B cell (primary cell): ENCODE measurements at regions of chr7 and their contacts with region 1.

Region 1: DNA sequence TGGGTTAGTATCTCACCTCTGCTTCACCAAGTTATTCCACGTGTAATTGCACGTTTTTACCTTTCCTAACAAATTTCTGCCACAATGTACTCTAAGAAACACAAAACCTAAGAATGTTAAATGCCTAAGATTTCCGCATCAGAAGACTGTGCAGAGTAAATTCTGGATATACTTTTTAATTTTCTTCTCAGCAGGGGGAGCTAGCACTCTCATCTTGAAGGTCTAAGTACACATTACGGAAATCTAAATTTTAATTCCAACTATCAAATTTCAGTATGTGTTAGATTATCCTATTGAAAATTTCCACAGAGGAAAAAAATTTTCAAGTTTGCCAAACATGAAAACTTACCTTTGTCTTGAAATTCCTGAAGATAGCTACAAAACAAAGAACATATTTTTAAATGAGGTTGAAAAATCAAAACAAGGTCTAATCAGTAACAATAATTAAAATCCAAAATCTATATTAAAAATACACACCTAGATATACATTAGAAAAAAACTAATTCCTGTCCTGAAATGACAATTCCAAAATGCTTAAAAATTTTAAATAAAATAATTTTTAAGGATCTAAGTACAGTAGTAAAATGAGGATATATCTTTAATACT is 10.5 kb downstream of the SKAP2 start:
- DNase-seq: peak; percentile 62
- ATAC-seq: no peak
- H3K4me3 ChIP-seq: no peak overlapping the region
- H3K4me3 Mint-ChIP-seq: no peak overlapping the region
- H3K27ac ChIP-seq: no peak overlapping the region
- H3K27ac Mint-ChIP-seq: no peak overlapping the region
- H3K4me1 ChIP-seq: peaks cover 21 to 23% of the 10 kb centered on the region in 2 donors
- H3K4me1 Mint-ChIP-seq: peaks cover 26% of the 10 kb centered on the region
- H3K27me3 ChIP-seq: no peaks in the 10 kb centered on the region
- H3K27me3 Mint-ChIP-seq: no peaks in the 10 kb centered on the region
- CTCF ChIP-seq: peak; percentile 74

Region 2: GRCh38 chr7:25862260-25863037 is 991.4 kb before region 1 on chr7:
- CTCF ChIA-PET with region 1: no interaction called
- POLR2A ChIA-PET with region 1: no interaction called
- intact Hi-C with region 1: loop called (anchors 10 kb)
- DNase-seq: peak; percentile 71
- ATAC-seq: peak; percentile 72
- H3K4me3 ChIP-seq: peak overlapping the region in 1 of 5 experiments; percentile 16
- H3K4me3 Mint-ChIP-seq: peak overlapping the region; percentile 47
- H3K27ac ChIP-seq: no peak overlapping the region
- H3K27ac Mint-ChIP-seq: peak overlapping the region; percentile 70
- H3K4me1 ChIP-seq: peaks cover 12 to 40% of the 10 kb centered on the region in 2 donors
- H3K4me1 Mint-ChIP-seq: peaks cover 3% of the 10 kb centered on the region
- H3K27me3 ChIP-seq: peaks cover 5 to 94% (median 79%) of the 10 kb centered on the region in 4 experiments
- H3K27me3 Mint-ChIP-seq: peaks cover 50% of the 10 kb centered on the region
- CTCF ChIP-seq: no peak

Region 3: DNA sequence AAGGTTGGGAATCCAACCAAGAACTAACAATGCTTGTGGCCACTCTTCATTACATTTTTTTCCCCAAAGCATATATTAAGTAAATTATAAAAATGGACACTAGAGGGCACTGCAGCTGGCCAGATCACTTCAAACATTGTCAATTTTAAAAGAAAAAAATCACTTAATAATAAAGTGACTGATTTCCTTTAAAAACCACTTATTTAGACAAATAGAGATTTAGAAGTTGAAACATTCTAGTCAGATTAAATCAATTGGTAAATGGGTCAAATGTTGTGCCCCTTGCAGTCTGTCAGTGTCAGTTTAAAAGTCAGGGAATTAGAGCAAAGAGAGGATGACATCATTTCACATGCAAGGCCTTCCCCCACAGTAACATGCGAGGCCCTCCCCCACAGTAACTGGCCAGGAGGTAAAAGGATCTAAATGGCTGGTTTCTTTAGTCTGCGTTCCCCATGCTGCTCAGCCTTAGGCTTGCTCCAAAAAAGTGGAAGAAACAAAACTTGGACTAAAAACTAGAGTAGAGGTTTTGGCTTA is 167.4 kb before region 1 on chr7:
- CTCF ChIA-PET with region 1: interaction called, 4 read pairs
- POLR2A ChIA-PET with region 1: no interaction called
- intact Hi-C with region 1: loop called (anchors 5 kb)
- DNase-seq: peak; percentile 60
- ATAC-seq: no peak
- H3K4me3 ChIP-seq: no peak overlapping the region
- H3K4me3 Mint-ChIP-seq: no peak overlapping the region
- H3K27ac ChIP-seq: no peak overlapping the region
- H3K27ac Mint-ChIP-seq: no peak overlapping the region
- H3K4me1 ChIP-seq: peaks cover 7 to 14% of the 10 kb centered on the region in 2 donors
- H3K4me1 Mint-ChIP-seq: peaks cover 28% of the 10 kb centered on the region
- H3K27me3 ChIP-seq: no peaks in the 10 kb centered on the region
- H3K27me3 Mint-ChIP-seq: no peaks in the 10 kb centered on the region
- CTCF ChIP-seq: peak; percentile 87

Region 4: DNA sequence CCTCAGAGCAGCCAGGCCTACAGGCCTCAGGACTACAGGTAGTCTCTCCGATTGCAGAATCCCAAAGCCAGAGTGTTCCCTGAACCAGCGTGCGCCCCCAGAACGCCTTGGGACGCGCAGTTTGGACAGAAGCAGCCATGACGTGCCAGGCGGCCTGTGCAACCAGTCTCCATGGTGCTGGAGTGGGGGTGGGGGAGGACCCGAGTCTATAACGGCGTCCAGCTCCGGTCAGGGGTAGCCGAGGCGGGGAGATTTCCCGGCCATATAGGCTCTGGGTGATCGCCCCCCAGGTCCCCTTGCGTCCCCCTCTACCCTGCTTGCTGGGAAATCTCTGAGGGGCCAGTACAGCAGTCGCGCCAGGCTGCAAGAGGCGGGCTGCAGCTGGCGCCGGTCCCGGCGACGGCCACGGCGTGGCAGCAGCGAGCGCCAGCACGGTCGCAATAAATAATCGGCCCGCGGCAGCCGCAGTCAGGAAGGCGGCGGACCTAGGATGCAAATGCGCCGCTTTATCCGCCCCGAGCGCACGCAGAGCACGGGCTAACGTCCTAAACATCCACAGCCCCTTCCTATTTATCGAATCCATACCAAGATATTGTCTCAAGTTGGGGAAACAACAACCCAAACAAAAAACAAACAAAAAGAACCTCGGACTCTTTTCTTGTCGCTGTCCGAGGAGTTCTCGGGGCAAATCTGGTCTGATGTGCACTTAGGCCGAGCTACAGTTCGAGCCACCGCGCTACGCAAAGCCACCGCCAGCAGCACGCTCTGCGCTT is 296.9 kb after region 1 on chr7:
- CTCF ChIA-PET with region 1: interaction called, 24 read pairs
- POLR2A ChIA-PET with region 1: no interaction called
- intact Hi-C with region 1: no loop called
- DNase-seq: peak; percentile 86
- ATAC-seq: peak; percentile 86
- H3K4me3 ChIP-seq: peak overlapping the region; percentile 26 to 48 (median 34)
- H3K4me3 Mint-ChIP-seq: peak overlapping the region; percentile 83
- H3K27ac ChIP-seq: no peak overlapping the region
- H3K27ac Mint-ChIP-seq: peak overlapping the region; percentile 73
- H3K4me1 ChIP-seq: peaks cover 62 to 71% of the 10 kb centered on the region in 2 donors
- H3K4me1 Mint-ChIP-seq: peaks cover 43% of the 10 kb centered on the region
- H3K27me3 ChIP-seq: peaks cover 0 to 99% (median 85%) of the 10 kb centered on the region in 4 experiments
- H3K27me3 Mint-ChIP-seq: peaks cover 74% of the 10 kb centered on the region
- CTCF ChIP-seq: peak; percentile 88